ENCODE measurements at regions of chr4 and their contacts with region 1.

Region 1: DNA sequence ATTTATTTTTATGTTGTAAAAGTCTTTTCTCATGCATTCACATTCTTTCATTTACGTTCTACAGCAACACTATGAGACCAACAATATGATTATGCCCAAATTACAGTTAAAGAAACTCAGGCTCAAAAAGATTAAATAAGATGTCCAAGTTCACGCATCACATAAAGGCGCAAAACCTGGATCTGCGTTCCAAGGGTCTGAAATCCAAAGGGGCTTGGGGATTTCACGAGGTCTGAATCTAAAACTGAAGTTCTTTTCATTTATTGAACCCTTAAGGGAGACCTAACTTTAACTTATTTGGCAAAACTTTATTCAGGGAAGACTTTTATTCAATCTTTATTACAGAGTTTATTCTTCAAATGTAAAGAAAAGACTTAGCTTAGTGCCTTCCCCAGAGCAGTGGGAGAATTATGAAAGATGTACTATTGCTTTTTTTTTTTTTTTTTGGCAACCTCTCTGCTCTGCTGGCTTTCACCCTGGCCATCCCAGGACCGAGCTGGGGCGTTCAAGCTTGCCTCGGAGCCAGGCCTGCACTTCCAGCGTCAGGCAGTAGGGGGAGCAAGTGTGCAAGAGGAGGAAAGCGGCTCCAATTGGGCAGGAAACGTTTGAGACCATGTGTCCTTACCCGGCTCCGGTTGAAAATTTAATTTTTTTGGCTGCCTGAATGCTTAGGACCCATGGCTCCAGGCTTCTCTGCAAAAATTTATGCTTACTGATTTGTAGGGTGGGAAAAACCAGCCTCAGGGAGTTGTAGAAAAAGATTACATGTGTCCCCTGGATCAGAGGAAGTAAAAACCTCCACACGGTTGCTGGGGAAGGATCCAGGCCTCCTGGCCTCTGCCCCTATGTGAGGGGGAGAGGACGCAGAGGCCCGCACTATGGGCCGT is 344.3 kb upstream of the KLF3 start:
- DNase-seq: peak; percentile 93 to 98 (median 98)
- ATAC-seq: peak; percentile 83 to 85
- H3K4me3 ChIP-seq: peak overlapping the region; percentile 46
- H3K27ac ChIP-seq: peak overlapping the region; percentile 94
- H3K4me1 ChIP-seq: no peaks in the 10 kb centered on the region
- H3K27me3 ChIP-seq: no peaks in the 10 kb centered on the region

Region 2: DNA sequence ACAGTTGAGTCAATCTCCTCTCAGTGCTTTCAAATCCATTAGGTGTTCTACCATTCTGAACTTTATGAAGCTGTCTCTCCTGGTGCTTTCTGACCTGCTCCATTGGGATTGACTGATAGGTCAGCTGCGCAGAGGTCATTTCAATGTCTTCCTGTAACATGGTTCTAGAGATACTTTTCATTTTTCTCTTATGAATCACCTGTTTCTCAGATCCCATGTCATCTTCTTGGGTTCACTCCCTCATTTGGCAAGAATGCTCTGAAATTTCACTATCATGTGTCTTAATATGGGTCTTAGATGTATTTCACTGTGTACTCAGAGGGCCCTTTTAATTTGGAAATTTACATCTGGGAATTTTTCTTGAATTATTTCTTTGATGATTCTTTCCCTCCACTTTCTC is 507.0 kb before region 1 on chr4:
- intact Hi-C with region 1: no loop called
- DNase-seq: no peak
- ATAC-seq: no peak
- H3K4me3 ChIP-seq: no peak overlapping the region
- H3K27ac ChIP-seq: no peak overlapping the region
- H3K4me1 ChIP-seq: no peaks in the 10 kb centered on the region
- H3K27me3 ChIP-seq: no peaks in the 10 kb centered on the region

Region 3: GRCh38 chr4:38255572-38255971 is 64.1 kb before region 1 on chr4:
- intact Hi-C with region 1: no loop called
- DNase-seq: no peak
- ATAC-seq: no peak
- H3K4me3 ChIP-seq: no peak overlapping the region
- H3K27ac ChIP-seq: no peak overlapping the region
- H3K4me1 ChIP-seq: peaks cover 2% of the 10 kb centered on the region
- H3K27me3 ChIP-seq: no peaks in the 10 kb centered on the region

Region 4: GRCh38 chr4:38292529-38292928 is 27.2 kb before region 1 on chr4:
- intact Hi-C with region 1: no loop called
- DNase-seq: no peak
- ATAC-seq: no peak
- H3K4me3 ChIP-seq: no peak overlapping the region
- H3K27ac ChIP-seq: no peak overlapping the region
- H3K4me1 ChIP-seq: no peaks in the 10 kb centered on the region
- H3K27me3 ChIP-seq: no peaks in the 10 kb centered on the region

Region 5: GRCh38 chr4:38387348-38387747 is 67.6 kb after region 1 on chr4:
- intact Hi-C with region 1: loop called in 1 of 4 experiments (anchors 2 kb)
- DNase-seq: peak; percentile 73 to 88 (median 83)
- ATAC-seq: peak; percentile 93 to 96
- H3K4me3 ChIP-seq: no peak overlapping the region
- H3K27ac ChIP-seq: no peak overlapping the region
- H3K4me1 ChIP-seq: peaks cover 8% of the 10 kb centered on the region
- H3K27me3 ChIP-seq: no peaks in the 10 kb centered on the region

Region 6: GRCh38 chr4:38663801-38664705 is 344.4 kb after region 1 on chr4 and contains the start of gene KLF3:
- intact Hi-C with region 1: loop called in 1 of 4 experiments (anchors 5 kb)
- DNase-seq: peak; percentile 97 to 98 (median 98)
- ATAC-seq: peak; percentile 91 to 93
- H3K4me3 ChIP-seq: peak within 1 kb of the TSS; percentile 96
- H3K27ac ChIP-seq: peak within 1 kb of the TSS; percentile 100
- H3K4me1 ChIP-seq: no peaks in the 10 kb centered on the region
- H3K27me3 ChIP-seq: no peaks in the 10 kb centered on the region
- total RNA-seq, gene KLF3: 22.2 to 29.3 (median 25.4) TPM

Region 7: DNA sequence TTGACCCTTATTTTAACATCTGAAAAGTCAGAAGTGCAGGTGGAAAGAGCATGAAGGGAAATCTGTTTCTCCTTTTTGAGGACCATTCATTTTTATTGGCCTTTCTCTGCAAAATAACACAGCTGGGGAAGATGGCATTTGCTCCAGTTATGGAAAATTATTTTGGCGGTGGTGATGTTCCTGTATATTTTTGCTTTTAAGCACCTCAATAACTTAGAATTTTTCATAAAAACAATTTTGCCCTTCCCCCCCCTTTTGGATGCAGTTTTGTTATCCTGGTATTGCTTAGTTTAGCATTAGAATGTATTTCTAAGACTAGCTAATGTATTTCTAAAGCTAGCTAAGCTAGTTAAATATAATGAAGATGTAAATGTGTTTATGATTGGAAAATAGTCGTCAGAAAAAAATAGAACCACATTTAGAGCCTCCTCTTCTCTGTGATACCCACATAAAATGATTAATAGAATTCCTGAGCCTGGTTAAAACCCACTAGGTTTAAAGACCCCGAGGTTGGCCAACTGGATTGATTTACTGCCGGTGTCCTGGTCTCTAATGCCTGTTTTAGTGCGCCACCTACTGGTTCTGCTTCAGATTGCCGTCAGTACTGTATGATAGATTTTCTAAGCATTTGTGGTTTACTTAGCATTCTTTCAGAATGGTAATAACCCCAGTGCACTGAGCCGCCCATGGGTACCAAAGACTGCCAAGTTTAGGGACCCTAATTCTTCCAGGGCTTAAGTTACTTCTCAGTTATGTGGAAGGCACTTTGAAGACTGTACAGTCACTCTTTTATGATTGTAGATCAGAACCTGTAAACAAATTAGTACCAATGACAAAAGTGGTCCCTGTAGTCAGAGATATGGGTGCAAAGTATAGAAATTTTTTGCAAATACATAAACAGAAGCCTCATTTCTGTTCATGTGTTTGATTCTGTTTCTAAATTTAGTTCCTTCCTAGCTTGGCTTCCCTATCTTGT is 355.7 kb after region 1 on chr4:
- intact Hi-C with region 1: loop called in 3 of 4 experiments (anchors 2 to 5 kb)
- DNase-seq: peak; percentile 69 to 85 (median 72)
- ATAC-seq: peak; percentile 32 to 43
- H3K4me3 ChIP-seq: no peak overlapping the region
- H3K27ac ChIP-seq: no peak overlapping the region
- H3K4me1 ChIP-seq: peaks cover 28% of the 10 kb centered on the region
- H3K27me3 ChIP-seq: no peaks in the 10 kb centered on the region

Region 8: GRCh38 chr4:38730830-38731646 is 411.3 kb after region 1 on chr4:
- intact Hi-C with region 1: loop called in 1 of 4 experiments (anchors 2 kb)
- DNase-seq: peak; percentile 81 to 94 (median 93)
- ATAC-seq: peak; percentile 85 to 88
- H3K4me3 ChIP-seq: no peak overlapping the region
- H3K27ac ChIP-seq: no peak overlapping the region
- H3K4me1 ChIP-seq: no peaks in the 10 kb centered on the region
- H3K27me3 ChIP-seq: no peaks in the 10 kb centered on the region

Measured in right cardiac atrium (tissue), 5 donors.